Heart left ventricle (tissue), 16 donors: ENCODE measurements at regions of chr1 and their contacts with region 1.

Region 1: GRCh38 chr1:74245168-74245772 is 10.1 kb downstream of the TNNI3K start:
- DNase-seq: no peak
- ATAC-seq: peak; percentile 40 to 75 (median 57)
- H3K4me3 ChIP-seq: peak overlapping the region in 2 of 12 donors; percentile 2 to 10
- H3K27ac ChIP-seq: peak overlapping the region; percentile 10 to 82 (median 62)
- H3K4me1 ChIP-seq: peaks cover 0 to 25% (median 0%) of the 10 kb centered on the region in 12 donors
- H3K27me3 ChIP-seq: no peaks in the 10 kb centered on the region
- CTCF ChIP-seq: no peak
- POLR2A ChIP-seq: no peak

Region 2: DNA sequence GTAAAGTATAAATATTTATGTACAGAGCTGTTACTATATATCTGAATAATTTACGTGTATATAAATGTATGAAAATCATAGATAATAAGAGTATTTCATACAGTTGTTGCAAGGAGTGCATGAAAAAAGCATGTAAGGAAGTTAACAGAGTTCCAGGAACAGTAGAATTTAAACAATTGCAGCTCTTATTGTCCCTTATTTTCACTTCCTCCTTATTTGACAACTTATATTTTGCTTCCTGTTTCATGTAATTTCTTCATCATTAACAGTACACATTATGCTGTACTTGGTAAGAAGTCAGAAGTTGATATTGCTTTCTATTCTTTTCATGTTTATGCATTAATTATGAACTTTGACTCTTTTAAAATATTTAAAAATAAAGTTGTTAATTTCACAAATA is 728.8 kb before region 1 on chr1:
- intact Hi-C with region 1: no loop called
- DNase-seq: no peak
- ATAC-seq: no peak
- H3K4me3 ChIP-seq: no peak overlapping the region
- H3K27ac ChIP-seq: peak overlapping the region in 1 of 12 donors; percentile 53
- H3K4me1 ChIP-seq: no peaks in the 10 kb centered on the region
- H3K27me3 ChIP-seq: no peaks in the 10 kb centered on the region
- CTCF ChIP-seq: no peak
- POLR2A ChIP-seq: no peak

Region 3: DNA sequence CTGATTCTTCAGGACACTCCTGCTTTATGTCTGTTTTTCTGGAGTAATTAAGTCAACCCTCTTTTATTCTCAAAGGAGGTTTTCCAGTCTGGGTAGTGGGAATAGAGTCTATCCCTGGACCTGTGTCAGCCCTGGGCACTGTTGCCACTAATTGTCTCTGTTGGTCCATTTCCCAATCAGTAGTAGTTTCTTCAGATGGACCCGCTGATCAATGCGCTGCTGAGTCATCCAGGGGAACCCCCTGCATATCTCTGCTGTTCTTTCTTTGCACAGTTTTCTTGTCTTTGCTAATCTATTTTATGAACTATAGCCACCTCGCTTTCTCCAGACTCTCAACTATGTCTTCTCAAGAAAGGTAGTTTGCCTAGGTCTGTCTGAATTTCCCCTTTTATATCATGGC is 72.4 kb after region 1 on chr1:
- intact Hi-C with region 1: loop called in 1 of 10 experiments (anchors 10 kb)
- DNase-seq: no peak
- ATAC-seq: no peak
- H3K4me3 ChIP-seq: no peak overlapping the region
- H3K27ac ChIP-seq: no peak overlapping the region
- H3K4me1 ChIP-seq: peaks cover 0 to 15% (median 0%) of the 10 kb centered on the region in 12 donors
- H3K27me3 ChIP-seq: no peaks in the 10 kb centered on the region
- CTCF ChIP-seq: no peak
- POLR2A ChIP-seq: no peak